ENCODE measurements at regions of chrX and their contacts with region 1.

Region 1: GRCh38 chrX:102768987-102769761 is 48.6 kb downstream of the GPRASP3 start:
- DNase-seq: peak; percentile 77 to 87 (median 80)
- H3K4me3 ChIP-seq: peak overlapping the region; percentile 47 to 52
- H3K4me3 Mint-ChIP-seq: peak overlapping the region; percentile 95 to 99 (median 96)
- H3K27ac ChIP-seq: peak overlapping the region; percentile 67
- H3K27ac Mint-ChIP-seq: peak overlapping the region; percentile 95 to 100 (median 98)
- H3K4me1 ChIP-seq: peaks cover 9% of the 10 kb centered on the region
- H3K4me1 Mint-ChIP-seq: peaks cover 6 to 15% (median 10%) of the 10 kb centered on the region in 4 donors
- H3K27me3 ChIP-seq: no peaks in the 10 kb centered on the region
- H3K27me3 Mint-ChIP-seq: no peaks in the 10 kb centered on the region

Region 2: DNA sequence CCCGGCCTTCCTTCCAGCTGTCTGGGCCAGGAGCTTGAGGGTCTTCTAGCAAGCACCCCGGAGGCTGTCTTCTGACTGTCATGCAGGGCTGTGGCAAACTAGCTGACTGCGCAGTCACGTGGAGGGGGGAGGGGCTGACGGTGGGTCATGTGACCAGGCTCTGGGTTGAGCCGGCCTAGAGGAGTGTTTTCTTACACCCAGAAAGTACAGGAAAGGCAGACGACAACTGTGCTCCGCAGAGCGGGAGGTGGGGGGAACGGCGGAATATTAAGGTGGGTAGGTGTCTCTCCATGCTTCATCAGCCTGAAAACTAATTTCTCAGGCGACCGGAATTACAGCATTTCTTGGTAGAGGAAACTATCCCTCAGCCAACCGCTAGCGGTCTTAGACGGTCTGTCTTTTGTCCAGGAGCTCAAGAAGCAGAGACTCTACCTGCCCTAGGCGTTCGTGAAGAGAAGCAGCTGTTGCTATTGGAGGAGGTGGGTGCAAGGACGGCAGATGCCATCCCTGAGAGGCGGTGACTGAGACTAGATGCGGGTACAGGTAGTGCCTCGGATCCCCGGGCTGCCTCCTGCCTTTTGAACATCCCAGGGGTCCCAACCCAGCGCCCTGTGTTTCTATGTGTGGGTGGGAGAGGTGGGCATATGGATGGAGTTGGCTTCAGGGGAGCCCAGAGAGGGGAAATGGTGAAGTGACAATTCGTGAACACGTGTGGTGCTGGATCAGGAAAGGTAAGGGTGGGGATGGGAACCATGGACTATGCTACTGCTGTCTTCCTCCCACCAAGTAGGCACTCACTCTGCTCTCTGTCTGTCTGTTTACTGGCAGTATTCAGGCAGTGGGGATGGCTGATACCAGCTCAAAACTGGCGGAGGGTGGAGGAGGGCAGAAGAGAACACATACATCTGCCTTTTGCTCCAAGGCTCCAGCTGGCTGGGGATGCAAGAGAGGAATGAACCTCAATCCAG is 109.1 kb before region 1 on chrX:
- CTCF ChIA-PET with region 1: no interaction called
- POLR2A ChIA-PET with region 1: no interaction called
- intact Hi-C with region 1: loop called (anchors 5 kb)
- DNase-seq: peak; percentile 73 to 86 (median 77)
- H3K4me3 ChIP-seq: peak overlapping the region; percentile 11 to 64
- H3K4me3 Mint-ChIP-seq: peak overlapping the region; percentile 86 to 96 (median 90)
- H3K27ac ChIP-seq: peak overlapping the region; percentile 36
- H3K27ac Mint-ChIP-seq: peak overlapping the region; percentile 74 to 97 (median 95)
- H3K4me1 ChIP-seq: peaks cover 5% of the 10 kb centered on the region
- H3K4me1 Mint-ChIP-seq: peaks cover 14 to 39% (median 22%) of the 10 kb centered on the region in 4 donors
- H3K27me3 ChIP-seq: no peaks in the 10 kb centered on the region
- H3K27me3 Mint-ChIP-seq: no peaks in the 10 kb centered on the region

Region 3: DNA sequence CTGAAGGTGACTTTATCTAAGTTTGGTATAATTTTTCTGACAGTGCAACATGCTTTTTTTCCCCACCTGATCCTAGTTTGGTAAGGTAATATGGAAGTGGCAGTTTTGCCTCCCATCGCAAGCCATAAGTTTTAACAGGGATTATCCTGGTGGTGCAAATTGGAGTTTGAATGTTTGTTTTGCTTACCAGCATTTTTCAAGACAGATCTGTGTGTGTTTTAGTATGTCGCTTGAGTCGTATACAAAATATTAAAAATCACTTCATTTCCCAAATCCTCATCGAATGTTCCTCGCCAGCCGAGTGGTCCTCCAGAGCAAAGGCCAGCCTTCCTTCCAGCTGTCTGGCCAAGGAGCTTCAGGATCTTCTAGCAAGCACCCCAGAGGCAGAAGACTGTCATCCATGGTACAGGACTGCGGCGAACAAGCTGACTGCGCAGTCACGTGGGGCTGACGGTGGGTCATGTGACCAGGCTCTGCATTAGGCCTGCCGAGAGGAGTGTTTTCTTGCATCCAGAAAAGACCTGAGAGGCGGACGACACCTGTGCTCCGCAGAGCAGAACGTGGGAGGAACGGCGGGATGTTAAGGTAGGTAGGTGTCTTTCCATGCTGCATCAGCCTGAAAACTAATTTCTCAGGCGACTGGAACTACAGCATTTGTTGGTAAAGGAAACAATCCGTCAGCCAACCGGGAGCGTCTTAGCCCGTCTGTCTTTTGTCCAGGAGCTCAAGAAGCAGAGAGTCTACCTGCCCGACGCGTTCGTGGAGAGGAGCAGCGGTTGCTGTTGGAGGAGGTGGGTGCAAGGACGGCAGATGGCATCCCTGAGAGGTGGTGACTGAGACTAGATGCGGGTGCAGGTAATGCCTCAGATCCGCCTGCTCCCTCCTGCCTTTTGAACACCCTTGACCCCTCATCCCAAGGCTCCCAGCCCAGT is 48.7 kb before region 1 on chrX and contains the start of gene GPRASP3:
- CTCF ChIA-PET with region 1: no interaction called
- POLR2A ChIA-PET with region 1: no interaction called
- intact Hi-C with region 1: loop called (anchors 2 kb)
- DNase-seq: peak; percentile 56 to 78 (median 64)
- H3K4me3 ChIP-seq: peak within 1 kb of the TSS; percentile 5 to 47
- H3K4me3 Mint-ChIP-seq: peak within 1 kb of the TSS; percentile 87 to 97 (median 91)
- H3K27ac ChIP-seq: peak within 1 kb of the TSS; percentile 30
- H3K27ac Mint-ChIP-seq: peak within 1 kb of the TSS; percentile 69 to 92 (median 88)
- H3K4me1 ChIP-seq: peaks cover 5% of the 10 kb centered on the region
- H3K4me1 Mint-ChIP-seq: peaks cover 10 to 17% (median 11%) of the 10 kb centered on the region in 4 donors
- H3K27me3 ChIP-seq: no peaks in the 10 kb centered on the region
- H3K27me3 Mint-ChIP-seq: no peaks in the 10 kb centered on the region
- total RNA-seq, gene GPRASP3: 2.4 to 3.5 TPM